CD4-positive, alpha-beta T cell (primary cell): ENCODE measurements at regions of chr1 and their contacts with region 1.

Region 1: GRCh38 chr1:64268653-64269557 is 65.5 kb downstream of the UBE2U start:
- DNase-seq: peak; percentile 19 to 83 (median 56)
- ATAC-seq: peak; percentile 71
- H3K4me3 ChIP-seq: no peak overlapping the region
- H3K4me3 Mint-ChIP-seq: no peak overlapping the region
- H3K27ac ChIP-seq: no peak overlapping the region
- H3K27ac Mint-ChIP-seq: no peak overlapping the region
- H3K4me1 ChIP-seq: no peaks in the 10 kb centered on the region
- H3K4me1 Mint-ChIP-seq: no peaks in the 10 kb centered on the region
- H3K27me3 ChIP-seq: peaks cover 0 to 10% of the 10 kb centered on the region in 2 experiments
- H3K27me3 Mint-ChIP-seq: peaks cover 45% of the 10 kb centered on the region
- CTCF ChIP-seq: peak; percentile 84

Region 2: GRCh38 chr1:64675718-64676345 is 406.9 kb after region 1 on chr1:
- CTCF ChIA-PET with region 1: interaction called, 4 read pairs
- POLR2A ChIA-PET with region 1: no interaction called
- intact Hi-C with region 1: loop called (anchors 1 kb)
- DNase-seq: peak in 3 of 14 experiments; percentile 14 to 31 (median 29)
- ATAC-seq: peak; percentile 51
- H3K4me3 ChIP-seq: no peak overlapping the region
- H3K4me3 Mint-ChIP-seq: no peak overlapping the region
- H3K27ac ChIP-seq: no peak overlapping the region
- H3K27ac Mint-ChIP-seq: no peak overlapping the region
- H3K4me1 ChIP-seq: no peaks in the 10 kb centered on the region
- H3K4me1 Mint-ChIP-seq: no peaks in the 10 kb centered on the region
- H3K27me3 ChIP-seq: no peaks in the 10 kb centered on the region
- H3K27me3 Mint-ChIP-seq: no peaks in the 10 kb centered on the region
- CTCF ChIP-seq: peak; percentile 89